ENCODE measurements at regions of chr5 and their contacts with region 1.

Region 1: DNA sequence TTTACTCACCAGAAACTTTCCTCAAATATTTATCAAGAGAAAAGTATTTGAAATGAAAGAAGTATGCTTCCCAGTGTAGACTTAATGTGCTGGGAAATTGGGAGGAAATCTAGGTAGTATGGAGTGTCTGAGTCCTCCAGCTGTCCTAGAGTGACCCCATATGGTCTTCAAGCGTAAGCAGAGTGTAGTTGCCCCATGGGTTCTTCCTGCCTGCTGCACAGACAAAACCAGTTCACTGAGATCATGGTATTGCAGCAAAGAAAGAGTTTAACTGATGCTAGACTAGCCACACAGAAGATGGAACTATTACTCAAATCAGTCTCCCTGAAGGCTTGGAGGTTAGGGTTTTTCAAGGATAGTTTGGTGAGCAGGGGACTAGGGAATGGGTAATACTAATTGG is 114.9 kb upstream of the PRLR start:
- DNase-seq: no peak
- H3K4me3 ChIP-seq: no peak overlapping the region
- CTCF ChIP-seq: no peak
- POLR2A ChIP-seq: no peak

Region 2: GRCh38 chr5:34660444-34661112 is 684.6 kb before region 1 on chr5:
- intact Hi-C with region 1: loop called (anchors 10 kb)
- DNase-seq: no peak
- H3K4me3 ChIP-seq: no peak overlapping the region
- CTCF ChIP-seq: no peak
- POLR2A ChIP-seq: no peak

Region 3: DNA sequence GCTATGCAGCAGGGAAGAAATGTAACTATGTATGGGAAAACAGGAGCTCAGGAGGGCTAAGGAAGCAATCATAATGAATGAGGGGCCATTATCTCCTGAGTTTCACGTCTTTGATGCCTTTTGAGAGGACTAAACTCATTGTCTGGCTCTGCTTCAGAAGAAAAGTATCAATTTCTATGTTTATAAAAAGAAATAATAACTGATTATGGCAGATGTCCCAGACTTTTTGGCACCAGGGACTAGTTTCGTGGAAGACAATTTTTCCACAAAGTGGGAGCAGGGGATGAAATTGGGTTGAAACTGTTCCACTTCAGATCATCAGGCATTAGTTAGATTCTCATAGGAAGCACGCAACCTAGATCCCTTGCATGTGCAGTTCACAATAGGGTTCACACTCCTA is 502.7 kb after region 1 on chr5:
- intact Hi-C with region 1: no loop called
- DNase-seq: no peak
- H3K4me3 ChIP-seq: no peak overlapping the region
- CTCF ChIP-seq: no peak
- POLR2A ChIP-seq: no peak

Measured in lower leg skin (tissue), 4 donors.